Activated CD4-positive, alpha-beta T cell treated with anti-CD3 and anti-CD28 coated beads for 36 hours (primary cell): ENCODE measurements at regions of chr16 and their contacts with region 1.

Region 1: GRCh38 chr16:85717393-85718121 is 28.8 kb upstream of the GINS2 start:
- DNase-seq: peak; percentile 79
- ATAC-seq: peak; percentile 72
- H3K4me3 Mint-ChIP-seq: no peak overlapping the region
- H3K27ac Mint-ChIP-seq: no peak overlapping the region
- H3K4me1 Mint-ChIP-seq: peaks cover 3% of the 10 kb centered on the region
- H3K27me3 Mint-ChIP-seq: no peaks in the 10 kb centered on the region

Region 2: GRCh38 chr16:85305996-85306792 is 411.4 kb before region 1 on chr16:
- CTCF ChIA-PET with region 1: no interaction called
- POLR2A ChIA-PET with region 1: no interaction called
- intact Hi-C with region 1: loop called in 1 of 2 experiments (anchors 5 kb)
- DNase-seq: peak; percentile 95
- ATAC-seq: peak; percentile 94
- H3K4me3 Mint-ChIP-seq: no peak overlapping the region
- H3K27ac Mint-ChIP-seq: peak overlapping the region; percentile 89
- H3K4me1 Mint-ChIP-seq: peaks cover 55% of the 10 kb centered on the region
- H3K27me3 Mint-ChIP-seq: no peaks in the 10 kb centered on the region

Region 3: GRCh38 chr16:85420501-85421337 is 296.8 kb before region 1 on chr16:
- CTCF ChIA-PET with region 1: interaction called, 3 read pairs
- POLR2A ChIA-PET with region 1: no interaction called
- intact Hi-C with region 1: loop called in 1 of 2 experiments (anchors 1 kb)
- DNase-seq: peak; percentile 89
- ATAC-seq: peak; percentile 76
- H3K4me3 Mint-ChIP-seq: no peak overlapping the region
- H3K27ac Mint-ChIP-seq: no peak overlapping the region
- H3K4me1 Mint-ChIP-seq: peaks cover 7% of the 10 kb centered on the region
- H3K27me3 Mint-ChIP-seq: no peaks in the 10 kb centered on the region

Region 4: DNA sequence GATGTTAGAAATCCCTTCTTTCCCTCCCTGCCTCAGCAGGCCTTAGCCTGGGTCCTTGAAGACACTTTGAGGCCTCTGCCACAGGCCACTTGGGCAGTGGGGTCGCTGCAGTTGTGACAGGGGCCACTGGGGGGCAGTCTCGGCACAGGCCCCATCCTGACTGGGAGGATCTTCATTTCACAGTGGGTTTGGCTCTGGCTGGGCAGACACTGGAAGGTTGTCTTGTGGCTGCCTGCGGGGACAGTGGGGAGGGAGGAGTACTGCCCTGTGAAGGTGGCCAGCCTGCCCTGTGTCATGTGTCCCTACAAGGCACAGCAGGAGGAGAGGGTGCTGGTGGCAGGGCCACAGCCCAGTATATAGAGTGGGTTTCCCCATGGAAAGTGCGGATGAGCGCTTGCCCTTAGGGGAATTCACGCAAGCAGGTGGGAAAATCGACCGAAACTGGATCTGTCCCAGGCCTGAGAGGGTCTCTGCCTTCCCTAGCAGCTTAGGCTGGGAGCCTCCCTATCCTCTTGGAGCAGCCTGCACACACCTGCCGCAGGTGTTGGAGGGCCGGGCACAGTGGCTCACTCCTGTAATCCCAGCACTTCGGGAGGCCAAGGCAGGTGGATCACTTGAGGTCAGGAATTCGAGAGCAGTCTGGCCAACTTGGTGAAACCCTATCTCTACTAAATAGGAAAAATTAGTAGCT is 57.6 kb before region 1 on chr16:
- CTCF ChIA-PET with region 1: interaction called, 26 read pairs
- POLR2A ChIA-PET with region 1: no interaction called
- intact Hi-C with region 1: loop called (anchors 1 kb)
- DNase-seq: peak; percentile 82
- ATAC-seq: peak; percentile 85
- H3K4me3 Mint-ChIP-seq: no peak overlapping the region
- H3K27ac Mint-ChIP-seq: no peak overlapping the region
- H3K4me1 Mint-ChIP-seq: no peaks in the 10 kb centered on the region
- H3K27me3 Mint-ChIP-seq: no peaks in the 10 kb centered on the region

Region 5: GRCh38 chr16:85688586-85689284 is 28.8 kb before region 1 on chr16 and contains the start of gene GINS2:
- CTCF ChIA-PET with region 1: interaction called, 8 read pairs
- POLR2A ChIA-PET with region 1: interaction called, 4 read pairs
- intact Hi-C with region 1: loop called in 1 of 2 experiments (anchors 1 kb)
- DNase-seq: peak; percentile 96
- ATAC-seq: peak; percentile 100
- H3K4me3 Mint-ChIP-seq: peak within 1 kb of the TSS; percentile 88
- H3K27ac Mint-ChIP-seq: peak within 1 kb of the TSS; percentile 93
- H3K4me1 Mint-ChIP-seq: peaks cover 18% of the 10 kb centered on the region
- H3K27me3 Mint-ChIP-seq: peaks cover 4% of the 10 kb centered on the region
- total RNA-seq, gene GINS2: 86.4 to 87.5 TPM

Region 6: GRCh38 chr16:85746008-85746781 is 28.6 kb after region 1 on chr16:
- CTCF ChIA-PET with region 1: no interaction called
- POLR2A ChIA-PET with region 1: no interaction called
- intact Hi-C with region 1: no loop called
- DNase-seq: no peak
- ATAC-seq: no peak
- H3K4me3 Mint-ChIP-seq: no peak overlapping the region
- H3K27ac Mint-ChIP-seq: no peak overlapping the region
- H3K4me1 Mint-ChIP-seq: peaks cover 5% of the 10 kb centered on the region
- H3K27me3 Mint-ChIP-seq: peaks cover 9% of the 10 kb centered on the region